Dendritic cell treated with granulocyte-macrophage colony-stimulating factor and Interleukin-4, amounts not matched to agents 40 ng/mL and 50 ng/mL, for 4 days (primary cell): ENCODE measurements at regions of chr5 and their contacts with region 1.

Region 1: DNA sequence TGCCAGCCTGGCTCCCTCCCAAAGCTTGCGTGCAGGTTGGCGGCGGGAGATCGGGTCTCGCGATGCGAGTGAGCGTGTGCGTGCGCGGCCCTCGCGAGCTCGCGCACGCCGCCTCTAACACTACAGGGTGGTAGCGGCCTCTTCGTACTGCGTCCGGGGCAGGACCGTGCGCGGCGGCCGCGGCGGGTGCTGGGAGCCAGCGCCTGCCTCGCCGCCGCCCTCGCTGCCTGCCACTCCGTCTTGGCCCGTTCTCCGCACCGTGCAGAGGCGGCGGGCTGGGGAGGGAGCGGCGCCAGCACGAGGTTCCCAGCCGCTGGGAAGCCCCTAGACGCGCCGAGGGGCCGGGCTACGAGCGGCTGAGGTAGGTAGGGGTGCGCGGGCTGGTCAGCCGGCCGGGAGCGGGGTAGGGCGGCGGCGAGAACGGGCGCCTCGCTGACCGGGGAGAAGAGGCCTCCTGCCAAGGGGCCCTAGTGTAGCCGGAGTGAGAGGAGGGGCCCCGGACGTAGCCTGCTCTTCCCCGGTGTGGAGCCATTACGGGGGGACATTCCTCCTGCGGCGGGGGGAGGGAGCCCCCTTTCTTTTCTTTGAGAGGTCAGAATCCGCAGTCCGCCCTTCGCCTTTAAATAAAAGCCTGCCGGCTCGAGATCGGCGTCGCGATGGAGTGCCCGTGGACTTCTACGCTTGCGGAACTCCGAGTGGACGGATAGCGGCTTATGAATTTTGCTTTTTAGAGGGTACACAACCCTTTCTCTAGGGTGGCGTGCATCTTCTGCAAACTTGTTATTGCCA is at the start of gene C5orf24:
- H3K4me3 Mint-ChIP-seq: peak within 1 kb of the TSS; percentile 87
- H3K27ac Mint-ChIP-seq: peak within 1 kb of the TSS; percentile 96
- H3K4me1 Mint-ChIP-seq: peaks cover 21% of the 10 kb centered on the region
- H3K27me3 Mint-ChIP-seq: no peaks in the 10 kb centered on the region

Region 2: GRCh38 chr5:134798468-134798867 is 47.6 kb before region 1 on chr5:
- intact Hi-C with region 1: no loop called
- H3K4me3 Mint-ChIP-seq: no peak overlapping the region
- H3K27ac Mint-ChIP-seq: no peak overlapping the region
- H3K4me1 Mint-ChIP-seq: no peaks in the 10 kb centered on the region
- H3K27me3 Mint-ChIP-seq: no peaks in the 10 kb centered on the region

Region 3: DNA sequence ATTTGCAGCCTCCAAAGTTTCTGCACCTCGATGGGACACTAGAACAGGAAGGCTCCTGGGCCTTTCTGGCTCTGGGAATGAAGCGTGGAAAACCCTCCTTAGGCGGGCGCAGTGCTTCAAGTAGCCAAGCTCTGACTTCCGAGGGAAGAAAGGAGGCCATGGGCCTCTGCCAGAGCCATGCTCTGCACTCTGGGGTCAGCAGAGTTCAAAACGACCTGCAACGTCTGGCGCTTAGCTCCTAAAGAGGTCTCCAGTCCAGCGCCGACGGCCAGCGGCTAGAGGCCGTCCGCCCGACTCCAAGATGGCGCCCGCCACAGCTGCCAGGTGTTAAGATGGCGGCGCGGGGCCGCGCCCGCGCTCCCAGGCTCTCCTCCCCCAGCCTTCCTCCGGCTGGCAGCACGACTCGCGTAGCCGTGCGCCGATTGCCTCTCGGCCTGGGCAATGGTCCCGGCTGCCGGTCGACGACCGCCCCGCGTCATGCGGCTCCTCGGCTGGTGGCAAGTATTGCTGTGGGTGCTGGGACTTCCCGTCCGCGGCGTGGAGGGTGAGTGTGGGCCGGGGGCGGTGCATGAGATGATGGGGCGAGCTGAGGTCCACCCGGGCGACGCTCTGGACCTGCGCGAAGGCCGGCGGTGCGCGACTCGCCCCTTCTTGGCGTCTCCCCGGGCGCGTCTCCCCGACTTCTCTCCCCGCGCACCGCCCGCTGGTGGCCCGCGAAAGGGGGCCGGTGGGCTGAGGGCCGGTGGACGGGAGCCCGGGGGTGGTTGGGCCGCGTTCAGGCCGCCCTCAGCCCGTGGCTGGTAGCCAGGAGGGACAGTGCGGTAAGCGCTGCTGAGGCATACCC is 28.2 kb after region 1 on chr5 and contains the start of gene TXNDC15:
- intact Hi-C with region 1: loop called (anchors 1 kb)
- H3K4me3 Mint-ChIP-seq: peak within 1 kb of the TSS; percentile 97
- H3K27ac Mint-ChIP-seq: peak within 1 kb of the TSS; percentile 97
- H3K4me1 Mint-ChIP-seq: peaks cover 35% of the 10 kb centered on the region
- H3K27me3 Mint-ChIP-seq: no peaks in the 10 kb centered on the region

Region 4: DNA sequence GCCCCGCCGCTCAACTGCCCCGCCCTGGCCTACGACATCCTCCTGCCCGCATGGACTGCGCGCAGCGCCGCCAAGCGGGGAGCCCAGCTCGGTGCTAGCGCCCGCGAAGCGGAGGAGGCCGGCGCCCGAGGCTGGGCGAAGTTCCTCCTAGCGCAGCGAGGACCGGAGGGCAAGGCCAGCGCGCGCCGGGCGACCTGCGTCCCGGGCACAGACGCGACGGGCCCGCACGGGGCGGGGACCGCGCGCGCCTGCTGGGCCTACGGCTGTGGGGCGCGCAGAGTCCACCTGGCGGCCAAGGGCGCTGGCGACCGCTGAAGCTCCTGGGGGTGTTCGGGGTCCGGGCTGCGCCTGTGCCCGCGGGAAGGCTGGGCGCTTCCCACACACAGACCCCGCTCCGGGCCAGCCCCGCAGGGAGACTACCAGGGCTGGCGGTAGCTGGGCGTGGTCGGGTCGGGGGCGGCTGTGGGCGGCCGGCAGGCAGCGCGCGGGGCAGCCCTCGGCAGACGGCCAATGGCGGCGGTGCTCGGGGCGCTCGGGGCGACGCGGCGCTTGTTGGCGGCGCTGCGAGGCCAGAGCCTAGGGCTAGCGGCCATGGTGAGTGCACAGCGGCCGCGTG is 58.7 kb after region 1 on chr5 and contains the start of gene PCBD2:
- intact Hi-C with region 1: loop called (anchors 2 kb)
- H3K4me3 Mint-ChIP-seq: peak within 1 kb of the TSS; percentile 86
- H3K27ac Mint-ChIP-seq: peak within 1 kb of the TSS; percentile 93
- H3K4me1 Mint-ChIP-seq: peaks cover 14% of the 10 kb centered on the region
- H3K27me3 Mint-ChIP-seq: no peaks in the 10 kb centered on the region